Activated CD4-positive, alpha-beta T cell treated with anti-CD3 and anti-CD28 coated beads for 36 hours (primary cell): ENCODE measurements at regions of chr5 and their contacts with region 1.

Region 1: GRCh38 chr5:176415952-176416924 is at the start of gene CLTB:
- DNase-seq: peak; percentile 94
- ATAC-seq: peak; percentile 96
- H3K4me3 Mint-ChIP-seq: peak within 1 kb of the TSS; percentile 74
- H3K27ac Mint-ChIP-seq: peak within 1 kb of the TSS; percentile 76
- H3K4me1 Mint-ChIP-seq: peaks cover 36% of the 10 kb centered on the region
- H3K27me3 Mint-ChIP-seq: no peaks in the 10 kb centered on the region
- total RNA-seq, gene CLTB: 39.3 to 47.8 TPM

Region 2: GRCh38 chr5:176388444-176389134 is 27.6 kb before region 1 on chr5 and contains the starts of genes HIGD2A and NOP16:
- CTCF ChIA-PET with region 1: interaction called, 4 read pairs
- POLR2A ChIA-PET with region 1: no interaction called
- intact Hi-C with region 1: loop called in 1 of 2 experiments (anchors 1 kb)
- DNase-seq: peak; percentile 100
- ATAC-seq: peak; percentile 93
- H3K4me3 Mint-ChIP-seq: peak within 1 kb of the TSS; percentile 95
- H3K27ac Mint-ChIP-seq: peak within 1 kb of the TSS; percentile 100
- H3K4me1 Mint-ChIP-seq: peaks cover 31% of the 10 kb centered on the region
- H3K27me3 Mint-ChIP-seq: no peaks in the 10 kb centered on the region
- total RNA-seq, gene HIGD2A: 104 to 140 TPM
- total RNA-seq, gene NOP16: 54.3 to 65.4 TPM

Region 3: DNA sequence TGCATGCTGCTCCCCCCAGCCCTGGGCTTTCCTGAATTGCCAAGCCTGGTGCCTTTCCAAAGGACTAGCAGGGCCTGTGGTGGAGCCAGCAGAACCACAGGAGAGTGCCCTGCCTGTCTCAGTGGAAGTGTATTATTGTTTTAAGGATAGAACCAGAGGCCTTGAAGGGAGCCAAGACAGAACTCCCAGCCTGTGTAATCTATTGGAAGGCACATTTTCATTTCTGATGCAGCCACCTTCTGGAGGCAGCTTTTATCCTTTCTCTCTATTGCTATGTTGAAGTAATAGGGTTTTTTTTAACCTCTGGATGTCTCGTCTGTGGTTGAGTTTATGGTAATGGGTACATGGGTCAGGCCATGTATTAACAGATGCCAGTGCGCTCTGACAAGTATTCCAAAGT is 91.7 kb after region 1 on chr5:
- CTCF ChIA-PET with region 1: no interaction called
- POLR2A ChIA-PET with region 1: interaction called, 10 read pairs
- intact Hi-C with region 1: no loop called
- DNase-seq: no peak
- ATAC-seq: no peak
- H3K4me3 Mint-ChIP-seq: no peak overlapping the region
- H3K27ac Mint-ChIP-seq: no peak overlapping the region
- H3K4me1 Mint-ChIP-seq: no peaks in the 10 kb centered on the region
- H3K27me3 Mint-ChIP-seq: no peaks in the 10 kb centered on the region

Region 4: DNA sequence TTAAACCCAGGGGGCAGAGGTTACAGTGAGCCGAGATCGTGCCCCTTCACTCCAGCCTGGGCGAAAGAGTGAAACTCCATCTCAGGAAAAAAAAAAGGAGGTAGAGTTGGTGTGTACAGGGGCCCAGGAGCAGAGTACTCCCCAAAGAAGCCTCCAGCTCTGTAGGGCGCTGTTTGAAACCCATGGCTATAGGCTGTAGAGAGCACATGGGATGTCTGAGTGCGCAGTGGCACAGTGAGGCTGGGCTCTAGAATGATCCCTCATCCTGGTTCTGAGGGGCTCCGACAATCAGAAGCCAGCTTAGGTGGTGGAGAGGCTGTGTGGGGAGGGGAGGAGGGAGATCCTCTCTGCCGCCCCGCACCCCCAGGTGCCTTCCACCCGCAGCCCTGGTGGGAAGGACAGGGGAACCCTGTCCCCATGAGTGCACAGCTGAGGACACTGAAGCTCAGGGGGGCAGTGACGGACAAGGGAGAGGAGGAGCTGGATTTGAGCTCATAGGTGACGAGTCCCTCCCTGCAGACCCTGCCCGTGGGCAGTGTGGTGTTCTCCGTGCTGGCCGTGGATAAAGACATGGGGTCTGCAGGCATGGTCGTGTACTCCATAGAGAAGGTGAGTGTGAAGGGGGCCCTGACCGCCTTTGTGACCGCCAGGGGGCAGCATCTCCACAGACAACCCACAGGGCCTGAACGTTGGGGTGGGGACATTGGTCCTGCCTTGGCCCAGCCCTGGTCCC is 157.5 kb after region 1 on chr5:
- CTCF ChIA-PET with region 1: interaction called, 4 read pairs
- POLR2A ChIA-PET with region 1: no interaction called
- intact Hi-C with region 1: loop called (anchors 1 to 10 kb)
- DNase-seq: peak; percentile 88
- ATAC-seq: peak; percentile 90
- H3K4me3 Mint-ChIP-seq: no peak overlapping the region
- H3K27ac Mint-ChIP-seq: no peak overlapping the region
- H3K4me1 Mint-ChIP-seq: no peaks in the 10 kb centered on the region
- H3K27me3 Mint-ChIP-seq: peaks cover 4% of the 10 kb centered on the region

Region 5: GRCh38 chr5:176609724-176610434 is 193.6 kb after region 1 on chr5 and contains the start of gene GPRIN1:
- CTCF ChIA-PET with region 1: no interaction called
- POLR2A ChIA-PET with region 1: no interaction called
- intact Hi-C with region 1: loop called in 1 of 2 experiments (anchors 1 kb)
- DNase-seq: peak; percentile 77
- ATAC-seq: peak; percentile 83
- H3K4me3 Mint-ChIP-seq: peak within 1 kb of the TSS; percentile 79
- H3K27ac Mint-ChIP-seq: no peak within 1 kb of the TSS
- H3K4me1 Mint-ChIP-seq: peaks cover 10% of the 10 kb centered on the region
- H3K27me3 Mint-ChIP-seq: peaks cover 28% of the 10 kb centered on the region
- total RNA-seq, gene GPRIN1: 3.8 to 4.1 TPM

Region 6: GRCh38 chr5:177071666-177072385 is 655.6 kb after region 1 on chr5:
- CTCF ChIA-PET with region 1: no interaction called
- POLR2A ChIA-PET with region 1: no interaction called
- intact Hi-C with region 1: no loop called
- DNase-seq: peak; percentile 80
- ATAC-seq: peak; percentile 87
- H3K4me3 Mint-ChIP-seq: no peak overlapping the region
- H3K27ac Mint-ChIP-seq: no peak overlapping the region
- H3K4me1 Mint-ChIP-seq: peaks cover 4% of the 10 kb centered on the region
- H3K27me3 Mint-ChIP-seq: no peaks in the 10 kb centered on the region